ENCODE measurements at regions of chr11 and their contacts with region 1.

Region 1: GRCh38 chr11:62880803-62881578 is at the start of gene SLC3A2:
- DNase-seq: peak; percentile 94
- ATAC-seq: peak; percentile 75
- H3K4me3 Mint-ChIP-seq: peak within 1 kb of the TSS; percentile 99
- H3K27ac Mint-ChIP-seq: peak within 1 kb of the TSS; percentile 100
- H3K4me1 Mint-ChIP-seq: peaks cover 44% of the 10 kb centered on the region
- H3K27me3 Mint-ChIP-seq: no peaks in the 10 kb centered on the region
- total RNA-seq, gene SLC3A2: 401 to 402 TPM

Region 2: DNA sequence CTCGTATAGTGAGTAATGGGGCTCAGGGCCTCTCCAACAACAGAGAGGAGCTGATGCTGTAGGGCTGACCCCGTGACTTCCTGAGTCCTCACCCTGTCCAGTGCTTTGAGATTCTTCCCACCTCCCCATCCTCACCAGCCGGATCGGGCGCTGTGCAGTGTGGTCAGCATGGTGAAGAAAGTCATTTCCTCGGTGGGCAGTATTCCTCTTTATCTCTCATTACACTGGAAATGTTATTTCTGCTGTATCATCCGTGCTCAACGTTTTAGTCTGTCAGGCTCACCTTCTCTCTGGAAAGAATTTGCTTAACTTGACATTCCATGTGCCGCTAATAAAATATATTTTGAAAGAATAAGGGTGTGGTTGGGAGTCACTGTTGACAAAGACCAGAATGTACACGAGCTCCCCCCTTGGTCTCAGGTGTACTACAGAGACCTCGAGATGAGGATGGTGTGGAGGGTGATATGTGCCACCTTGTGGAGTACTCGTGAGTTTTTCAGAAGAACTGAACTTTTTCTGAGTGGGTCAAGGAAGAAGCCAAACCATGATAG is 487.9 kb before region 1 on chr11:
- CTCF ChIA-PET with region 1: no interaction called
- POLR2A ChIA-PET with region 1: no interaction called
- intact Hi-C with region 1: no loop called
- DNase-seq: peak; percentile 30
- ATAC-seq: peak; percentile 68
- H3K4me3 Mint-ChIP-seq: no peak overlapping the region
- H3K27ac Mint-ChIP-seq: no peak overlapping the region
- H3K4me1 Mint-ChIP-seq: peaks cover 7% of the 10 kb centered on the region
- H3K27me3 Mint-ChIP-seq: no peaks in the 10 kb centered on the region

Region 3: GRCh38 chr11:62556108-62556871 is 324.7 kb before region 1 on chr11:
- CTCF ChIA-PET with region 1: no interaction called
- POLR2A ChIA-PET with region 1: interaction called, 3 read pairs
- intact Hi-C with region 1: loop called in 1 of 2 experiments (anchors 1 kb)
- DNase-seq: peak; percentile 92
- ATAC-seq: peak; percentile 65
- H3K4me3 Mint-ChIP-seq: peak overlapping the region; percentile 54
- H3K27ac Mint-ChIP-seq: peak overlapping the region; percentile 92
- H3K4me1 Mint-ChIP-seq: peaks cover 98% of the 10 kb centered on the region
- H3K27me3 Mint-ChIP-seq: no peaks in the 10 kb centered on the region

Region 4: GRCh38 chr11:62678770-62679696 is 202.0 kb before region 1 on chr11 and contains the start of gene UBXN1:
- CTCF ChIA-PET with region 1: no interaction called
- POLR2A ChIA-PET with region 1: no interaction called
- intact Hi-C with region 1: loop called in 1 of 2 experiments (anchors 2 kb)
- DNase-seq: peak; percentile 93
- ATAC-seq: peak; percentile 88
- H3K4me3 Mint-ChIP-seq: peak within 1 kb of the TSS; percentile 82
- H3K27ac Mint-ChIP-seq: peak within 1 kb of the TSS; percentile 92
- H3K4me1 Mint-ChIP-seq: peaks cover 28% of the 10 kb centered on the region
- H3K27me3 Mint-ChIP-seq: no peaks in the 10 kb centered on the region
- total RNA-seq, gene UBXN1: 95.6 to 119 TPM

Region 5: GRCh38 chr11:62771144-62772021 is 109.6 kb before region 1 on chr11 and contains the start of gene TAF6L:
- CTCF ChIA-PET with region 1: interaction called, 4 read pairs
- POLR2A ChIA-PET with region 1: interaction called, 5 read pairs
- intact Hi-C with region 1: loop called in 1 of 2 experiments (anchors 1 kb)
- DNase-seq: peak; percentile 98
- ATAC-seq: peak; percentile 87
- H3K4me3 Mint-ChIP-seq: peak within 1 kb of the TSS; percentile 85
- H3K27ac Mint-ChIP-seq: peak within 1 kb of the TSS; percentile 89
- H3K4me1 Mint-ChIP-seq: peaks cover 26% of the 10 kb centered on the region
- H3K27me3 Mint-ChIP-seq: no peaks in the 10 kb centered on the region
- total RNA-seq, gene TAF6L: 10.2 to 12.6 TPM

Region 6: DNA sequence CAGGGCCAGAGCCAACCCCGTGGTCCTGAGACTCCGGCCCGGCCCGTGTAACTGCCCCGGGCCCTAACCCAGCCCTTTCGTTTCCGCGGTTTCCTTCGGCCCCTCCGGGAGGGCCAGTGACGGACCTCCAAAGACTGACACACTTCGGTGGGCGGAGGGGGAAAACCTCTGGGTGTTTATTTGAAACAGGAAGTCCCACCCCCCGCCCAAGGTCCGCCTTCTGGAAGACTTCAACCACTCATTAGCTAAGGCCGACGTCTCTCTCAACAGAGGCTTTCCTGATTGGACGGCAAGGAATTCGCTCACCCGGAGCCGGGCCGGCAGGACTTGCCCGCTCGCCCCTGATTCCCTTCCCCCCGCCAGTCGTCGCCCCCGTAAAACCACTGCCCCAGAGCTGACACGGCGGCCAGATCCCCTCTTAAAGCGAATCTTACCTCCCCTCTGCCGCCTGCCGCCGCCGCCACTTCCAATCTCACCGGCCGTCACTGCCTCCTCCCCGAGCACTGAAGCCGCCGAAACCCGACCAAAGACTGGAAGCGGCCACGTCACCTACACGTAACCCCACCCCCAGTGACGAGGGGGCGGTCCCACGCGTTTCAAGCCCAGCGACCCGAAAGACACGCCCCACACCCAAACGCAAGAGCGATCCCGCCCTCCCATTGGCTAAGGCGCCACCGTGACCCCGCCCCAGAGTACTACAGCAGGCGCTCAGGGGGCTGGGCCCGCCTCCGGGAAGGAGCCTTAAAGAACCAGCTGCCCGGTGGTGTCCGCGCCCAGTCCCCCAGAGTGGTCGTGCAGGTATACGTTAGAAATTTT is 49.3 kb before region 1 on chr11 and contains the start of gene STX5:
- CTCF ChIA-PET with region 1: no interaction called
- POLR2A ChIA-PET with region 1: no interaction called
- intact Hi-C with region 1: loop called in 1 of 2 experiments (anchors 1 kb)
- DNase-seq: peak; percentile 100
- ATAC-seq: peak; percentile 95
- H3K4me3 Mint-ChIP-seq: peak within 1 kb of the TSS; percentile 84
- H3K27ac Mint-ChIP-seq: peak within 1 kb of the TSS; percentile 99
- H3K4me1 Mint-ChIP-seq: peaks cover 38% of the 10 kb centered on the region
- H3K27me3 Mint-ChIP-seq: no peaks in the 10 kb centered on the region
- total RNA-seq, gene STX5: 19.3 to 21.8 TPM

Region 7: GRCh38 chr11:62905927-62906531 is 25.0 kb after region 1 on chr11:
- CTCF ChIA-PET with region 1: interaction called, 10 read pairs
- POLR2A ChIA-PET with region 1: interaction called, 9 read pairs
- intact Hi-C with region 1: no loop called
- DNase-seq: peak; percentile 88
- ATAC-seq: peak; percentile 82
- H3K4me3 Mint-ChIP-seq: no peak overlapping the region
- H3K27ac Mint-ChIP-seq: no peak overlapping the region
- H3K4me1 Mint-ChIP-seq: peaks cover 22% of the 10 kb centered on the region
- H3K27me3 Mint-ChIP-seq: peaks cover 8% of the 10 kb centered on the region

Region 8: DNA sequence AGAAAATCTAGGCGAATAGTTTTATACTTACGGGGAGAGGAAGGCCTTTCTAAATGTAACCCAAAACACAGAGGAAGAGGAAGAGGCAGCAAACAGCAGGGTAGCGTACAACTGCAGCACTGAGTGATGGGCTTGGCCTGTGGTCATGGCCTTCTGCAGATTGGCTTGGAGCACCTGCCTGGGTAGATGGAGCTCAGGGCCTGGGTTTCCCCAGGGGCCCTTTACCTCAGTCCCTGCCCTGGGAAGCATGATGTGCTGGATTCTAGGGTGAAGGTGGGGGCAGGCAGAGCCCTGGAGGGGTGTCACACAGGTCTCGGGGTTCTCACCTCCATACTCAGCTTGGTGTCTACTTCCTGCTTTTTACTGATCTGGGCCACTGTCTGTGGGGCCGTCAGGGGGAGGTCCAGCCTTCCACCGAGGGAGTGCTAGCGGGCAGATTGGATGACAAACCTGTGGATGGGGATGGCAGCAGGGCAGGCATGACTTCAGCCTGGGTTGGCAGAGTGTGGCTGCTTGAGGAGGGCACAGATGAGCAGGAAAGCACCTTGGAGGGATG is 67.9 kb after region 1 on chr11:
- CTCF ChIA-PET with region 1: no interaction called
- POLR2A ChIA-PET with region 1: no interaction called
- intact Hi-C with region 1: no loop called
- DNase-seq: no peak
- ATAC-seq: no peak
- H3K4me3 Mint-ChIP-seq: no peak overlapping the region
- H3K27ac Mint-ChIP-seq: no peak overlapping the region
- H3K4me1 Mint-ChIP-seq: no peaks in the 10 kb centered on the region
- H3K27me3 Mint-ChIP-seq: peaks cover 13% of the 10 kb centered on the region

Region 9: GRCh38 chr11:63427971-63428508 is 547.0 kb after region 1 on chr11:
- CTCF ChIA-PET with region 1: no interaction called
- POLR2A ChIA-PET with region 1: no interaction called
- intact Hi-C with region 1: no loop called
- DNase-seq: no peak
- ATAC-seq: no peak
- H3K4me3 Mint-ChIP-seq: no peak overlapping the region
- H3K27ac Mint-ChIP-seq: no peak overlapping the region
- H3K4me1 Mint-ChIP-seq: no peaks in the 10 kb centered on the region
- H3K27me3 Mint-ChIP-seq: peaks cover 24% of the 10 kb centered on the region

Region 10: DNA sequence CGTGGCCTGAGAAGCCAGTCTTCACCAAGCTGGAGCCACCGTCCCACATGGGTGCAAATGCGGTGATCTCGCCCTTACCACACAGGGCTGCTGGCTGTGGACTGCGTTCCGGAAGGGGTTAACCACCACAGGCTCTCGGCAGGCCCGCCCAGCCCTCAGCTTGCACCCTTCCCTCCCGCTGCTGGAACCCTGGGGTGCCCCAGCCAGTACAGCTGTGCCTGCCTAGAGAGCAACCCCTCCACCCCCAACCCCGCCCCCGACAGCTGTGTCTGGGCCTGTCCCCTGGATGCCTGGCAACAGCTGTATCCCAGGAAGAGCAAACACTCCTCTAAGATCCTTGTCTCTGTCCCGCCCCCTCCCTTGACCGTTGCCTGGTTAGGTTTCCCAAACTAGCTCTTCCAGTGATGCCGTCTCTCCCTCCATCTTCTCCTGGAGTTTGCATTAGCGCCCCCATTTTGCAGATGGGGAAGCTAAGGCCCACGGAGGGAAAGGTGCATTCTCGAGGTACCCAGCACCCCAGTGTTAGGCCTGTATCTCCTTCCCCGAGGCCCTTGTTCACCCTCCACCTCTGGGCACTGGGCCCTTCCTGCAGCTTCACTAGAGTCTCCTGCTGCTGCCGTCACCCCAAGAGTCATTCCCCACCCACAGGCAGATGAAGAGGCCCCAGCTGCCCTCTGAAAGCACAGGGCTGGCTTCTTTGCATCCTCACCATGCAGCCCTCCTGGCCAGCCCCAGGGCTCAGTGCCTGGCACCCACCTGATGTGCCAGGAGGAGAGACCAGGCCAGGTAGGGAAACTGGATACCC is 1080.8 kb after region 1 on chr11:
- CTCF ChIA-PET with region 1: no interaction called
- POLR2A ChIA-PET with region 1: no interaction called
- intact Hi-C with region 1: no loop called
- DNase-seq: peak; percentile 24
- ATAC-seq: peak; percentile 60
- H3K4me3 Mint-ChIP-seq: no peak overlapping the region
- H3K27ac Mint-ChIP-seq: no peak overlapping the region
- H3K4me1 Mint-ChIP-seq: peaks cover 7% of the 10 kb centered on the region
- H3K27me3 Mint-ChIP-seq: no peaks in the 10 kb centered on the region

Region 11: DNA sequence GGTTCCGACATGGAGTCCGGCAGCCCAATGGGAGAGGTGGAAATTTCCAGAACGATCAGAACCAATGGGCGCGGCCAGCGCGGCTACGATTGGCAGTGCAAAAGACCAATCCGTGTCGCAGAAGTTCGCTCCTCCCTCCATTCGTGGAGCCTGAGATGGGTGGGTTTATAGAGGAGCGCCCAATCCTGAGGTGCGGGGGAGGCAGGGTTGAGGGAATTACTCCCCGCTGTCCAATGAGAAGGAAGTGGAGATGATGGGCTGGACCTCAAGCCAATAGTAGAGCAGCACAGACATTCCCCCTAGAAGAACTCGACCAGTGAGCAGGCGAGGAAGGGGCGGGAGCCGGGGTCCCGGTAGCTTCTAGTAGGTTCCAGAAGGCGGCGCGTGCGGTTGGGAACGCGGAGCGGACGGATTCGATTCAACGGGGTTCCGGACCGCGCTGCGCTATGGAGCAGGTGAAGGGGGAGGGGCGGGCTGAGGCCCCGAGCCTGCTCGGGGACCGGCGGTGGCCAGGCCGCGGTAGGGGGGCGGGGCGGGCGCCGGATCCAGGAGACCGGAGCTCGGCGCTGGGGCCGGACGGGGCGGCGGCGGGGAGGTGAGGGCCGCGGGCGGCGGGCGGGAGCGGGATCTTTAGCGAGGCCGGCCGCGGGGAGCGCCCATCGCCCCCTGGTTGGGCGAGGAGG is 1305.0 kb after region 1 on chr11 and contains the start of gene STIP1:
- CTCF ChIA-PET with region 1: no interaction called
- POLR2A ChIA-PET with region 1: no interaction called
- intact Hi-C with region 1: loop called in 1 of 2 experiments (anchors 10 kb)
- DNase-seq: peak; percentile 99
- ATAC-seq: peak; percentile 92
- H3K4me3 Mint-ChIP-seq: no peak within 1 kb of the TSS
- H3K27ac Mint-ChIP-seq: peak within 1 kb of the TSS; percentile 92
- H3K4me1 Mint-ChIP-seq: peaks cover 42% of the 10 kb centered on the region
- H3K27me3 Mint-ChIP-seq: no peaks in the 10 kb centered on the region
- total RNA-seq, gene STIP1: 398 to 403 TPM

Measured in activated CD4-positive, alpha-beta T cell treated with anti-CD3 and anti-CD28 coated beads for 36 hours (primary cell).